ENCODE measurements at regions of chr20 and their contacts with region 1.

Region 1: GRCh38 chr20:24917797-24918578 is 31.1 kb upstream of the CST7 start:
- DNase-seq: peak; percentile 53
- H3K4me3 ChIP-seq: no peak overlapping the region
- H3K27ac ChIP-seq: no peak overlapping the region
- H3K4me1 ChIP-seq: no peaks in the 10 kb centered on the region
- H3K27me3 ChIP-seq: no peaks in the 10 kb centered on the region
- CTCF ChIP-seq: peak; percentile 71 to 88 (median 85)
- POLR2A ChIP-seq: no peak

Region 2: GRCh38 chr20:24160563-24161375 is 757.2 kb before region 1 on chr20:
- intact Hi-C with region 1: loop called (anchors 2 kb)
- DNase-seq: peak; percentile 40
- H3K4me3 ChIP-seq: no peak overlapping the region
- H3K27ac ChIP-seq: no peak overlapping the region
- H3K4me1 ChIP-seq: no peaks in the 10 kb centered on the region
- H3K27me3 ChIP-seq: no peaks in the 10 kb centered on the region
- CTCF ChIP-seq: peak; percentile 47 to 71 (median 66)
- POLR2A ChIP-seq: no peak

Region 3: GRCh38 chr20:24872291-24873024 is 45.5 kb before region 1 on chr20:
- intact Hi-C with region 1: no loop called
- DNase-seq: no peak
- H3K4me3 ChIP-seq: no peak overlapping the region
- H3K27ac ChIP-seq: no peak overlapping the region
- H3K4me1 ChIP-seq: no peaks in the 10 kb centered on the region
- H3K27me3 ChIP-seq: no peaks in the 10 kb centered on the region
- CTCF ChIP-seq: no peak
- POLR2A ChIP-seq: no peak

Measured in prostate gland (tissue), 2 donors.